AG04449 (cell line): ENCODE measurements at regions of chr12 and their contacts with region 1.

Region 1: GRCh38 chr12:49967042-49967776 is 5.5 kb downstream of the AQP5 start:
- DNase-seq: no peak
- H3K4me3 ChIP-seq: peak overlapping the region; percentile 56
- CTCF ChIP-seq: peak; percentile 96

Region 2: GRCh38 chr12:49720214-49720613 is 247.0 kb before region 1 on chr12:
- CTCF ChIA-PET with region 1: no interaction called
- POLR2A ChIA-PET with region 1: no interaction called
- DNase-seq: no peak
- H3K4me3 ChIP-seq: no peak overlapping the region
- CTCF ChIP-seq: no peak

Region 3: DNA sequence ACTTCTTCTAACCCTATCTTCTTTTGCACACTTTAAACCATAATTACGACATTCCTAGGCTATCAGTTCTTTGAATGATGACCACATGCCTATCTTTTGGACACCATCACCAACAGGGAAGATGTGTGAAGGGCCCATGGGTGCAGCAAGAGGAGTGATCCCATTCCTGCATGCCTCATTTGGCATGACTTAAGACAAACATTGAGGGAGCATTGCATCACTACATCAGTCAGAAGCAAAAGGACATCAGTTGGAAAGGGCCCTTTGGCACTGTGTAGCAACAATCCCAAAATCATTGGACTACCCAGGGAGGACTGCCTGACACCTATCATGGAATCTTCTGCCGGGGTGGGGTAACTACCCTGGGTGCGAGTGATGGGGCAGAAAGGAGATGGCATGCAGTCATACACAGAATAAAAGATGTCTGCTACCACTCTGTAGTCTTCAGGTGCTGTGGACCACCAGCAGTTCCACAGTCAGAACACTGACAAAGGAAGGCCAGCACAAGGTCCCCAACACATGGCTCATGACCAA is 236.6 kb before region 1 on chr12:
- CTCF ChIA-PET with region 1: no interaction called
- POLR2A ChIA-PET with region 1: no interaction called
- DNase-seq: no peak
- H3K4me3 ChIP-seq: no peak overlapping the region
- CTCF ChIP-seq: no peak

Region 4: GRCh38 chr12:49930515-49931288 is 36.5 kb before region 1 on chr12:
- CTCF ChIA-PET with region 1: interaction called, 15 read pairs
- POLR2A ChIA-PET with region 1: no interaction called
- DNase-seq: no peak
- H3K4me3 ChIP-seq: no peak overlapping the region
- CTCF ChIP-seq: no peak

Region 5: GRCh38 chr12:50006789-50007436 is 39.7 kb after region 1 on chr12:
- CTCF ChIA-PET with region 1: interaction called, 51 read pairs
- POLR2A ChIA-PET with region 1: no interaction called
- DNase-seq: no peak
- H3K4me3 ChIP-seq: no peak overlapping the region
- CTCF ChIP-seq: no peak

Region 6: GRCh38 chr12:50043854-50044253 is 76.6 kb after region 1 on chr12:
- CTCF ChIA-PET with region 1: interaction called, 119 read pairs
- POLR2A ChIA-PET with region 1: no interaction called
- DNase-seq: no peak
- H3K4me3 ChIP-seq: no peak overlapping the region
- CTCF ChIP-seq: no peak

Region 7: GRCh38 chr12:50084775-50085614 is 117.8 kb after region 1 on chr12 and contains the start of gene SMARCD1:
- CTCF ChIA-PET with region 1: interaction called, 1,042 read pairs
- POLR2A ChIA-PET with region 1: no interaction called
- DNase-seq: no peak
- H3K4me3 ChIP-seq: peak within 1 kb of the TSS; percentile 84
- CTCF ChIP-seq: peak; percentile 72

Region 8: DNA sequence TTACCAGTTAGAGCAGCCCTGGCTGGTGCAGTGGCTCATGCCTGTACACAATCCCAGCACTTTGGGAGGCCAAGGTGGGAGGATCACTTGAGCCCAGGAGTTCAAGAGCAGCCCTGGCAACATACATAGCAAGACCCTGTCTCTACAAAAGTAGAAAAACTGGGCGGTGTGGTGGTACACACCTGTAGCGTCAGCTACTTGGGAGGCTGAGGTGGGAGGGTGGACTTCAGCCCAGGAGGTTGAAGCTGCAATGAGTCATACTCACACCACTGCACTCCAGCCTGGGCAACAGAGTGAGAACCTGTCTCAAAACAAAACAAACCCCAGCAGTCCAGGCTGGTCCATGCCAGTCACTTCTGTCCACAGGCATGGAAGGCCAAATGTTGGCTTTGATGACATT is 152.2 kb after region 1 on chr12:
- CTCF ChIA-PET with region 1: no interaction called
- POLR2A ChIA-PET with region 1: no interaction called
- DNase-seq: no peak
- H3K4me3 ChIP-seq: no peak overlapping the region
- CTCF ChIP-seq: no peak

Region 9: DNA sequence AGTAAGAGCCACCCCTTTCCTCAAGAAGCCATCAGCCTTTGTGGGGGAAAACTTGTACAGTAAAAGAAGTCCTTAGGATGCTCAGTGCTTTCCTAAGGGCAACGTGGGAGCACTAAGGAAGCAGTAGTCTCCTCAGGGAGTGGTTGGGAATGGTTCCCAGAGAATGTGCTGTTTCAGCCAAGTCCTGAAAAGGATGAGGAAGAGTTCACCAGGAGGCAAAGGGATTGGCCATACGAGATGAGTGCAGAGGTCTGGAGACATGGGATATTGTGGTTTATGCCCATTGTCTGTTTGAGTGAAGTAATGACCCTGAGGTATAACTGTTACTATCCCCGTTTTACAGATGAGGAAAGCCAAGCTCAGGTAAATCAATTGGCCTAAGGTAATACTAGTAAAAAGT is 710.6 kb after region 1 on chr12:
- CTCF ChIA-PET with region 1: no interaction called
- POLR2A ChIA-PET with region 1: no interaction called
- DNase-seq: no peak
- H3K4me3 ChIP-seq: no peak overlapping the region
- CTCF ChIP-seq: no peak